GM18951 (cell line): ENCODE measurements at regions of chr6 and their contacts with region 1.

Region 1: GRCh38 chr6:3277851-3278416 is 19.2 kb downstream of the PSMG4 start:
- POLR2A ChIP-seq: no peak

Region 2: DNA sequence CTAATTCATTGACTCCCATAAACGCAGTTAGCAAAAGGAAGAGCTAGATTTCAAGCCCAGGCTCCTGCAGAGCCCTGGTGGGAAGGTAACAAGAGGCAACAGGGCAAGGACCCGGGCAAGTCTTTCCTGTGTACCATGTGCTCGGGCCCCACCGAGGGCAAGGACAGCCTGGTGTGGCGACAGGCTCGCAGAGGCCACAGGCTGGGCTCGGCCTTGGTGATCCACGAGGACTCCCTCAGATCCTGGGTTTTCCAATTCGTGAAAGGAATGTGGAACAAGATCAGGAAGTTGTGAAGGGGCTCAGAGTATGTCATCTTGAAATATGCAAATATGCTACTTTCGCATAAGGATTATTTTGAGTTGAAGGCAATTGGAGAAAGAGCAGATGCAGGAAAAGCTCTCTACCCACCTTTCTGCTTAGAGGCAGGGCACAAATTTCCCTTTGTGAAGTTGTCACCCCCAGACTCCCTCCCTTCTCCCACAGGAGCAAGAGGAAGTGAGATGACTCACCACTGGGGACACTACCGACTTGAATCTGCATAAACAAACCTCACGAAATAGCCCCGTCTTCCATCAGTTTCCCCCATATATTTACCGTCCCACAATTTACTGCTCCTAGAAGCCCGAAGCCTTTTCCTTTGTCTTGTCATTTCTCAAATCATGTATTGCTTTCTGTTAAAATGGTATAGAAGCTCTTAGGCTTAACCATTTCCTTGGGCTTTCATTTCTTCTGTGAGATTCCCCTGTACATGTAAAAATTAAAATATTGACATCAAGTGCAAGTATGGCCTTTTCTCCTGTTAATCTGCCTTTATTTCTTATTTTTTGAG is 59.8 kb after region 1 on chr6:
- in situ Hi-C with region 1: no loop called
- POLR2A ChIP-seq: no peak

Region 3: GRCh38 chr6:3732345-3733141 is 454.6 kb after region 1 on chr6:
- in situ Hi-C with region 1: loop called (anchors 5 kb)
- POLR2A ChIP-seq: no peak